Esophagus muscularis mucosa (tissue), 4 donors: ENCODE measurements at regions of chr9 and their contacts with region 1.

Region 1: GRCh38 chr9:84187090-84187489 is 153.5 kb downstream of the SLC28A3 start:
- DNase-seq: no peak
- H3K4me3 ChIP-seq: no peak overlapping the region
- H3K27ac ChIP-seq: no peak overlapping the region
- H3K4me1 ChIP-seq: peaks cover 5 to 7% (median 6%) of the 10 kb centered on the region in 4 donors
- H3K27me3 ChIP-seq: peaks cover 0 to 1% (median 0%) of the 10 kb centered on the region in 4 donors
- CTCF ChIP-seq: no peak
- EP300 ChIP-seq: no peak
- POLR2A ChIP-seq: no peak

Region 2: DNA sequence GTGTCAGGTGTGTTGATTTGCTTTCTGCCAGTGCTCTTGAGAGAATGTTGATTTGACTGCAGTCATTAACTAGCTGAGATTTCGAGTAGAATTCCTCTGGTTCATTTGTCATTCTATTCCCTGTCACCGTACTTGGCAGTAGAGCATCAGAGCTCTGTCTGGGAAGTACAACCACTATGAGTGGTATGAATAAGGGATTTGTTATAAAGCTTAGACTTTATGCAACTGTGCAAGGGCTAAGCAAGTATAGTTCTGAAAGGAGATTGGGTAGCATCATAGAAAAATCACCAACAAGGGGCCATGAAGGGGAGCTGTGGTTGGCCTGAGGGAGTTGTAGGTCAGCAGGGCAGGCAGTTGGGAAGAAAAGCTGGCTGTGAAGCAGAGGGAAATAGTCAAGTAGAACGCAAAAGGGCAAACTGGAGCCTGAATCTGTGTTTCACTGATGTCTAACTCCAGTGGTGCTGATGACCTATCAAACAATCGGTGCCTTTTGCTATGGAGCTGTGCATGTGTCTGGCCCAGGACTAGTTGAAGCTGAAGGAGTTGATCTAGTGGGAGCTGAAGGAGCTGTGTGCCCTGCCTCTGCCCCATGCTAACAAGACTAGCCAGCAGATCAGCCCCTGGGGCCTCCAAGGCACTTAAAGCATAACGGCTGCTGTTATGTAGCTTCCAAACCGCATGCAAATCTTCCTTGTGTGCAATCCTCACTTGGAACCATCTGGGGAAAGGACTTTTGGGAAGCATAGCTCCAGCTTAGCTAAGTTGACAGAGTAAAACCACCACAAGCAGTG is 43.5 kb after region 1 on chr9:
- intact Hi-C with region 1: no loop called
- DNase-seq: no peak
- H3K4me3 ChIP-seq: no peak overlapping the region
- H3K27ac ChIP-seq: no peak overlapping the region
- H3K4me1 ChIP-seq: peaks cover 0 to 14% (median 11%) of the 10 kb centered on the region in 4 donors
- H3K27me3 ChIP-seq: no peaks in the 10 kb centered on the region
- CTCF ChIP-seq: no peak
- EP300 ChIP-seq: no peak
- POLR2A ChIP-seq: no peak

Region 3: GRCh38 chr9:84254972-84255371 is 67.9 kb after region 1 on chr9:
- intact Hi-C with region 1: loop called (anchors 5 kb)
- DNase-seq: no peak
- H3K4me3 ChIP-seq: no peak overlapping the region
- H3K27ac ChIP-seq: no peak overlapping the region
- H3K4me1 ChIP-seq: no peaks in the 10 kb centered on the region
- H3K27me3 ChIP-seq: no peaks in the 10 kb centered on the region
- CTCF ChIP-seq: no peak
- EP300 ChIP-seq: no peak
- POLR2A ChIP-seq: no peak

Region 4: GRCh38 chr9:84371737-84372136 is 184.6 kb after region 1 on chr9:
- intact Hi-C with region 1: no loop called
- DNase-seq: no peak
- H3K4me3 ChIP-seq: no peak overlapping the region
- H3K27ac ChIP-seq: no peak overlapping the region
- H3K4me1 ChIP-seq: peaks cover 0 to 4% (median 0%) of the 10 kb centered on the region in 4 donors
- H3K27me3 ChIP-seq: no peaks in the 10 kb centered on the region
- CTCF ChIP-seq: no peak
- EP300 ChIP-seq: no peak
- POLR2A ChIP-seq: no peak